CD8-positive, alpha-beta T cell (primary cell): ENCODE measurements at regions of chr1 and their contacts with region 1.

Region 1: GRCh38 chr1:33181921-33182341 is at the start of gene TRIM62:
- DNase-seq: peak; percentile 48 to 88 (median 74)
- ATAC-seq: peak; percentile 74
- H3K4me3 ChIP-seq: peak within 1 kb of the TSS; percentile 82 to 85
- H3K4me3 Mint-ChIP-seq: peak within 1 kb of the TSS; percentile 88
- H3K27ac ChIP-seq: peak within 1 kb of the TSS in 1 of 2 experiments; percentile 36
- H3K27ac Mint-ChIP-seq: peak within 1 kb of the TSS; percentile 74
- H3K4me1 ChIP-seq: peaks cover 22% of the 10 kb centered on the region
- H3K4me1 Mint-ChIP-seq: peaks cover 31% of the 10 kb centered on the region
- H3K27me3 ChIP-seq: no peaks in the 10 kb centered on the region
- H3K27me3 Mint-ChIP-seq: peaks cover 6% of the 10 kb centered on the region
- CTCF ChIP-seq: no peak
- total RNA-seq, gene TRIM62: 14.3 to 14.8 TPM

Region 2: GRCh38 chr1:32964461-32965250 is 217.3 kb before region 1 on chr1 and contains the start of gene RNF19B:
- CTCF ChIA-PET with region 1: no interaction called
- POLR2A ChIA-PET with region 1: no interaction called
- intact Hi-C with region 1: loop called in 1 of 2 experiments (anchors 2 kb)
- DNase-seq: peak; percentile 89 to 97 (median 93)
- ATAC-seq: peak; percentile 93
- H3K4me3 ChIP-seq: peak within 1 kb of the TSS; percentile 68 to 70
- H3K4me3 Mint-ChIP-seq: peak within 1 kb of the TSS; percentile 88
- H3K27ac ChIP-seq: peak within 1 kb of the TSS; percentile 51 to 75
- H3K27ac Mint-ChIP-seq: peak within 1 kb of the TSS; percentile 91
- H3K4me1 ChIP-seq: peaks cover 24% of the 10 kb centered on the region
- H3K4me1 Mint-ChIP-seq: peaks cover 38% of the 10 kb centered on the region
- H3K27me3 ChIP-seq: peaks cover 0 to 3% of the 10 kb centered on the region in 2 experiments
- H3K27me3 Mint-ChIP-seq: no peaks in the 10 kb centered on the region
- CTCF ChIP-seq: no peak
- total RNA-seq, gene RNF19B: 43.9 to 44.6 TPM

Region 3: GRCh38 chr1:33080885-33081553 is 100.9 kb before region 1 on chr1 and contains the start of gene AZIN2:
- CTCF ChIA-PET with region 1: no interaction called
- POLR2A ChIA-PET with region 1: interaction called, 3 read pairs
- intact Hi-C with region 1: loop called (anchors 1 kb)
- DNase-seq: peak; percentile 92 to 100 (median 97)
- ATAC-seq: peak; percentile 99
- H3K4me3 ChIP-seq: peak within 1 kb of the TSS; percentile 57 to 89
- H3K4me3 Mint-ChIP-seq: peak within 1 kb of the TSS; percentile 82
- H3K27ac ChIP-seq: peak within 1 kb of the TSS; percentile 28 to 54
- H3K27ac Mint-ChIP-seq: peak within 1 kb of the TSS; percentile 82
- H3K4me1 ChIP-seq: peaks cover 22% of the 10 kb centered on the region
- H3K4me1 Mint-ChIP-seq: peaks cover 29% of the 10 kb centered on the region
- H3K27me3 ChIP-seq: peaks cover 0 to 2% of the 10 kb centered on the region in 2 experiments
- H3K27me3 Mint-ChIP-seq: no peaks in the 10 kb centered on the region
- CTCF ChIP-seq: no peak
- total RNA-seq, gene AZIN2: 3.5 to 4.1 TPM

Region 4: GRCh38 chr1:33256701-33257399 is 74.9 kb after region 1 on chr1:
- CTCF ChIA-PET with region 1: no interaction called
- POLR2A ChIA-PET with region 1: no interaction called
- intact Hi-C with region 1: loop called in 1 of 2 experiments (anchors 1 kb)
- DNase-seq: peak; percentile 13 to 73 (median 55)
- ATAC-seq: peak; percentile 65
- H3K4me3 ChIP-seq: peak overlapping the region; percentile 62 to 75
- H3K4me3 Mint-ChIP-seq: peak overlapping the region; percentile 99
- H3K27ac ChIP-seq: peak overlapping the region; percentile 48 to 51
- H3K27ac Mint-ChIP-seq: peak overlapping the region; percentile 97
- H3K4me1 ChIP-seq: peaks cover 42% of the 10 kb centered on the region
- H3K4me1 Mint-ChIP-seq: peaks cover 47% of the 10 kb centered on the region
- H3K27me3 ChIP-seq: no peaks in the 10 kb centered on the region
- H3K27me3 Mint-ChIP-seq: no peaks in the 10 kb centered on the region
- CTCF ChIP-seq: no peak

Region 5: GRCh38 chr1:33430692-33431593 is 249.0 kb after region 1 on chr1 and contains the start of gene PHC2:
- CTCF ChIA-PET with region 1: no interaction called
- POLR2A ChIA-PET with region 1: no interaction called
- intact Hi-C with region 1: loop called in 1 of 2 experiments (anchors 5 kb)
- DNase-seq: peak; percentile 80 to 96 (median 89)
- ATAC-seq: peak; percentile 95
- H3K4me3 ChIP-seq: peak within 1 kb of the TSS; percentile 31 to 47
- H3K4me3 Mint-ChIP-seq: peak within 1 kb of the TSS; percentile 77
- H3K27ac ChIP-seq: no peak within 1 kb of the TSS
- H3K27ac Mint-ChIP-seq: no peak within 1 kb of the TSS
- H3K4me1 ChIP-seq: no peaks in the 10 kb centered on the region
- H3K4me1 Mint-ChIP-seq: peaks cover 3% of the 10 kb centered on the region
- H3K27me3 ChIP-seq: no peaks in the 10 kb centered on the region
- H3K27me3 Mint-ChIP-seq: peaks cover 5% of the 10 kb centered on the region
- CTCF ChIP-seq: no peak
- total RNA-seq, gene PHC2: 39.7 to 40.4 TPM

Region 6: DNA sequence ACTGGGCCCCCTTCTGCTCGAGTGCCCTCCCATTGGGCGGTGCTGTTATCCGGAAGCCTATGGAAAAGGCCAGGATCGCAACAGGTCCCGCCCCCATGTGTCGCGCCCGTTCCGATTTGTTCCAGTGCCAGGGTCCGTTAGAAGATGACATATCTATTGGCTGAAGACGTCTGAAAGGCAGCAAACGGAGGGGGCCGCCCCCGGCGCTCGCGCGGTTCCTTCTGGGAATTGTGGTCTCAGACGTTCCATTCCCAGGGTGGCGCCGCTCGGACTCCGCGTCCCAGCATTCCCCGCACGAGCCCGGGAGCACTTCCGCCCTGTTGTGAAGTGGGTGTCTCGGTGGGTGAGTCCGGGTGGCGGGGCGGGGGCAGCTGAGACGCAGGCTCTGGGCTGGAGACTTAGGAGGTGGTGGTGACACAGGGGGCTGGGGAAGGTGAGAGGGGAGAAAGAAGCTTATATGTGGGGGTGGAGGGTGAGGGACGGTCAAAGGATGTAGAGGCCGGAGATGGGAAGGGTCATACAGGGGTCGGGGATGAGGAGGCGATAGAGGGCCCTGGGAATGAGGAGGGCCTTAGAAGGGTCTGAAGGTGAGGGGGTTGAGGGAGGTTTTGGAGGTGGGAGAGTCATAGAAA is 290.5 kb after region 1 on chr1 and contains the start of gene ZSCAN20:
- CTCF ChIA-PET with region 1: no interaction called
- POLR2A ChIA-PET with region 1: no interaction called
- intact Hi-C with region 1: loop called in 1 of 2 experiments (anchors 5 kb)
- DNase-seq: peak; percentile 59 to 92 (median 84)
- ATAC-seq: peak; percentile 98
- H3K4me3 ChIP-seq: peak within 1 kb of the TSS; percentile 29 to 49
- H3K4me3 Mint-ChIP-seq: peak within 1 kb of the TSS; percentile 87
- H3K27ac ChIP-seq: peak within 1 kb of the TSS in 1 of 2 experiments; percentile 67
- H3K27ac Mint-ChIP-seq: peak within 1 kb of the TSS; percentile 80
- H3K4me1 ChIP-seq: peaks cover 10% of the 10 kb centered on the region
- H3K4me1 Mint-ChIP-seq: peaks cover 31% of the 10 kb centered on the region
- H3K27me3 ChIP-seq: no peaks in the 10 kb centered on the region
- H3K27me3 Mint-ChIP-seq: no peaks in the 10 kb centered on the region
- CTCF ChIP-seq: no peak
- total RNA-seq, gene ZSCAN20: 0.19 TPM